T-cell (primary cell): ENCODE measurements at regions of chr20 and their contacts with region 1.

Region 1: DNA sequence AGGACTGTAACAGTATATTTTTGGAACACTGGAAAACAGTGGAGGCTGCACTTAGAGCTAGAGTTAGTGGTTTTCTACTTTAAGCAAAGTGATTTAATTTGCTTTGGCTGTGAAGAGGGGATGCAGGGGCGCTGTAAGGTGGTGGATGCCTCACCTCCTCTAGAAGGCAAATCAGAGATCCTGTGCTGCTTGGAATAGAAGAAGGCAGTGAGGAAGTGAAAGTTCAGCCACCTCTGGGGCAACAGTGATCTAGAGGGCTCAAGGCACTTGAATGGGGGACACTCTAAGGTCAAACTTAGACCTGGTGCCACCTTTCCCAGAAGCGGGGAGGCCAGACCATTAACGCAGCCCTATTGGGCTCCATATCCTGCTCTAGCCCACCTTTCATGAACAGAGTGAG is 19.0 kb upstream of the SNRPB2 start:
- DNase-seq: no peak
- ATAC-seq: no peak
- H3K4me3 ChIP-seq: no peak overlapping the region
- H3K4me3 Mint-ChIP-seq: no peak overlapping the region
- H3K27ac ChIP-seq: no peak overlapping the region
- H3K27ac Mint-ChIP-seq: no peak overlapping the region
- H3K4me1 ChIP-seq: peaks cover 20 to 22% of the 10 kb centered on the region in 2 experiments
- H3K4me1 Mint-ChIP-seq: peaks cover 39 to 41% (median 40%) of the 10 kb centered on the region in 3 donors
- H3K27me3 ChIP-seq: peaks cover 2 to 4% of the 10 kb centered on the region in 2 experiments
- H3K27me3 Mint-ChIP-seq: peaks cover 9 to 23% of the 10 kb centered on the region in 2 donors

Region 2: DNA sequence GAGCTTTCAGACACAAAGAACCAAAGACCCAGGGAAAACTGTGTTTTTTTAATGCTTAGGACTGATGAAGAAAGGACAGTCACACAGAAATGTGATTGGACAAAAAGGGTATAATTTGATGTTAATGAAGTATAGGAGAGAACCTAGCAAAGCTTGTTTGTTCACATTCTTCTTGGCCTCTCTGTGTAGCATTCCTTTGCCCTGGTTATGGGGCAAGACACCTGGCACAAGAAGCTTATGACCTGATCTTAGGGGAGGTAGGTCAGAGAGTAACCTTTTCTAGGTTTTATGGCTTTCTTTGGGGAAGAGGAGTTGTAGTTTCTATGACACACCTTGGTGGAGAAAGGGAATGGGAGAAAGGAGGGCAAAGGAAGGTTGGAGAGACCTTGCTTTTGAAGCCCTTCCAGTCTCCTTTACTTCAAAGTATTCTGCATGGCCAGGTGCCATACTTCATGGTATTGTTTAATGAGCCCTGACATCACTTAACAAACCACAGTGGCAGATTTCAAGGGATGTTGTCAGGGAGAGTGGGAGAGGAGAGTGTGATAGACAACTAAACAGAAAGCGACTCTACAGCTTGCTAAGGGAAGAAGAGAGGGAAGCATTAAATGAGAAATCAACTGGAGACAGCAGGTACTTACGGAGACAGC is 1671.6 kb before region 1 on chr20:
- CTCF ChIA-PET with region 1: no interaction called
- POLR2A ChIA-PET with region 1: no interaction called
- DNase-seq: no peak
- ATAC-seq: no peak
- H3K4me3 ChIP-seq: no peak overlapping the region
- H3K4me3 Mint-ChIP-seq: no peak overlapping the region
- H3K27ac ChIP-seq: no peak overlapping the region
- H3K27ac Mint-ChIP-seq: no peak overlapping the region
- H3K4me1 ChIP-seq: peaks cover 0 to 4% of the 10 kb centered on the region in 2 experiments
- H3K4me1 Mint-ChIP-seq: no peaks in the 10 kb centered on the region
- H3K27me3 ChIP-seq: no peaks in the 10 kb centered on the region
- H3K27me3 Mint-ChIP-seq: no peaks in the 10 kb centered on the region

Region 3: DNA sequence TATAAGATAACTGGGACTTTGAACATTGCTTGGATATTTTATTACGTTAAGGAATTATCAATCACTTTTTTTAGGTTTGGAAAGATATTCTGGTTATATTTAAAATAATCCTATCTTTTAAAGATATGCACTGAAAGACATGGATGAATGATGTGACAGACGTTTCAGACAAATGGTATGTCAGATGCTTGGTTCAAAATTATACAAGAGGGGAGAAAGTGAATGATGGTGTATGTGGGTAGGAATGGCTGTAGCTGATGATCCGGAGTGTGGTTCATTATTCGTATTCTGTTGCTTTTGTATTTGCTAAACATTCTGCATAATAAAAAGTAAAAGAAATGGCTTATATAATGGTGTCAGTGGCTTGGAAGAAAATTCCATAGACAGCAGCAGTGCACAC is 32.0 kb before region 1 on chr20:
- CTCF ChIA-PET with region 1: no interaction called
- POLR2A ChIA-PET with region 1: no interaction called
- DNase-seq: no peak
- ATAC-seq: no peak
- H3K4me3 ChIP-seq: no peak overlapping the region
- H3K4me3 Mint-ChIP-seq: no peak overlapping the region
- H3K27ac ChIP-seq: no peak overlapping the region
- H3K27ac Mint-ChIP-seq: no peak overlapping the region
- H3K4me1 ChIP-seq: no peaks in the 10 kb centered on the region
- H3K4me1 Mint-ChIP-seq: no peaks in the 10 kb centered on the region
- H3K27me3 ChIP-seq: no peaks in the 10 kb centered on the region
- H3K27me3 Mint-ChIP-seq: peaks cover 0 to 7% of the 10 kb centered on the region in 2 donors

Region 4: GRCh38 chr20:16692442-16692841 is 18.3 kb before region 1 on chr20:
- CTCF ChIA-PET with region 1: no interaction called
- POLR2A ChIA-PET with region 1: no interaction called
- DNase-seq: no peak
- ATAC-seq: no peak
- H3K4me3 ChIP-seq: no peak overlapping the region
- H3K4me3 Mint-ChIP-seq: no peak overlapping the region
- H3K27ac ChIP-seq: no peak overlapping the region
- H3K27ac Mint-ChIP-seq: no peak overlapping the region
- H3K4me1 ChIP-seq: no peaks in the 10 kb centered on the region
- H3K4me1 Mint-ChIP-seq: peaks cover 5 to 6% (median 5%) of the 10 kb centered on the region in 3 donors
- H3K27me3 ChIP-seq: peaks cover 3 to 4% of the 10 kb centered on the region in 2 experiments
- H3K27me3 Mint-ChIP-seq: peaks cover 25 to 27% of the 10 kb centered on the region in 2 donors

Region 5: DNA sequence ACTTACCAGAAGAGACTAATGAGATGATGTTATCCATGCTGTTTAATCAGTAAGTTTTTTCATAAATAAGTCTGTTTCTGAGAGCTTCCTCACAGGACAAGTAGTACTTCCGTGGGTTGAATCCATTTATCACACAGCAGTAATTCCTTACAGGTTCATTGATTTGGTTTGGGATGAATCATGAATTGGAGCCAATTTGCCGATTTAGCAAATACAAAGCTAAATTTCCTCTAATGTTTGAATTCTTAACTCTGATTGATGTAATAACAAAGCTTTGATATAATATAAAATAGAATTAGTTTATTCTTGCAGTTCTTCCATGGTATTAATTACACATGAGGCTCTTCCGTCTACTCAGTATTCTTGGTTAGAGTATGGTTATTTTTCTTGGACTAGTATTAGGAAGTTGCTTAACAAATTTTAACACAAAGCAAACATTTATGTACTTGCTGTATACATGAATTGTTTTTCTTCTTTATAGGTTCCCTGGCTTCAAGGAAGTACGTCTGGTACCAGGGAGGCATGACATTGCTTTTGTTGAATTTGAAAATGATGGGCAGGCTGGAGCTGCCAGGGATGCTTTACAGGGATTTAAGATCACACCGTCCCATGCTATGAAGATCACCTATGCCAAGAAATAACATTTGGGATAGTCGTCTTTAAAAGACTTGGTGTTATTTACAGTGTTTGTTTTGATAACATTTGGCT is 29.7 kb after region 1 on chr20:
- CTCF ChIA-PET with region 1: no interaction called
- POLR2A ChIA-PET with region 1: interaction called in 1 of 2 experiments, 10 read pairs
- DNase-seq: no peak
- ATAC-seq: no peak
- H3K4me3 ChIP-seq: no peak overlapping the region
- H3K4me3 Mint-ChIP-seq: no peak overlapping the region
- H3K27ac ChIP-seq: no peak overlapping the region
- H3K27ac Mint-ChIP-seq: no peak overlapping the region
- H3K4me1 ChIP-seq: no peaks in the 10 kb centered on the region
- H3K4me1 Mint-ChIP-seq: peaks cover 6 to 11% (median 7%) of the 10 kb centered on the region in 3 donors
- H3K27me3 ChIP-seq: no peaks in the 10 kb centered on the region
- H3K27me3 Mint-ChIP-seq: no peaks in the 10 kb centered on the region

Region 6: GRCh38 chr20:16752082-16752481 is 41.3 kb after region 1 on chr20:
- CTCF ChIA-PET with region 1: no interaction called
- POLR2A ChIA-PET with region 1: no interaction called
- DNase-seq: no peak
- ATAC-seq: no peak
- H3K4me3 ChIP-seq: no peak overlapping the region
- H3K4me3 Mint-ChIP-seq: no peak overlapping the region
- H3K27ac ChIP-seq: no peak overlapping the region
- H3K27ac Mint-ChIP-seq: no peak overlapping the region
- H3K4me1 ChIP-seq: no peaks in the 10 kb centered on the region
- H3K4me1 Mint-ChIP-seq: peaks cover 0 to 4% (median 2%) of the 10 kb centered on the region in 3 donors
- H3K27me3 ChIP-seq: no peaks in the 10 kb centered on the region
- H3K27me3 Mint-ChIP-seq: peaks cover 0 to 18% of the 10 kb centered on the region in 2 donors